HepG2 (cell line): ENCODE measurements at regions of chr2 and their contacts with region 1.

Region 1: DNA sequence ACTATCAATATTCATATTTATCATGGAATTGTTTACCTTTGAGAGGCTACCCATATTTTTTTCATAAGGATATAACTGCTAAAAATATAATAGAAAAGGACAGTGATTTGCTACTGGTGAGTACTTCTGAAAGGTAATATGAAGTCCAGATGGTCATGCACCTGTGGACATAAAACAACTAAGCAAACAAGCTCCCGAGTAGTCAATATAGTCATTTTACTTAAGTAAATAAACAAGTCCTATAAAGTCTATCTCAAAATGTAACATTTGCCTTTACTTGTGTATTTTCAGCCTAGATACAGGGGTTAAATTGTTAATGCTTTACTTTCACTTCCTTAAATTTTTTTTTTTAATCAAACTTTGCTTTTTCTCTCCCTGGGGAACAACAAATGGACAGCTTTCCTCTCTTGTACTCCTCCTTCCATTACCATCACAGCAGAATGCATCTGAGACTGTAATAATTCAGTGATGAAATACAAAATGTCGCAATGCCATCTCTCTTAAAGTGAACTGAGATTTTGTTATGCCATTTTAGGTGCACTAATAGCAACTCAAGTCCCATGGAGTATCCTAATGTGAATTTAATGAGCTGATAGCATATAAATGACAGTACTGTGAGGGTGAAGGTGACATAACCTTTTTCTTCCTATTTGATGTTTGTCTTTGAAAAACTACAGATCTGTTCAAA is 1325.4 kb upstream of the ZEB2 start:
- DNase-seq: peak; percentile 41
- ATAC-seq: peak; percentile 74
- H3K4me3 ChIP-seq: no peak overlapping the region; a peak in 1 of 6 replicates
- H3K27ac ChIP-seq: peak overlapping the region; percentile 17
- H3K4me1 ChIP-seq: peaks cover 42% of the 10 kb centered on the region
- H3K27me3 ChIP-seq: no peaks in the 10 kb centered on the region
- CTCF ChIP-seq: no peak
- EP300 ChIP-seq: peak in 1 of 2 experiments; percentile 11; a peak in 1 of 4 replicates
- POLR2A ChIP-seq: no peak
- RAD21 ChIP-seq: no peak

Region 2: GRCh38 chr2:145752091-145752806 is 93.1 kb before region 1 on chr2:
- CTCF ChIA-PET with region 1: no interaction called
- POLR2A ChIA-PET with region 1: no interaction called
- in situ Hi-C with region 1: no loop called
- intact Hi-C with region 1: loop called (anchors 2 kb)
- DNase-seq: peak; percentile 93
- ATAC-seq: peak; percentile 75
- H3K4me3 ChIP-seq: no peak overlapping the region
- H3K27ac ChIP-seq: peak overlapping the region; percentile 78
- H3K4me1 ChIP-seq: peaks cover 63% of the 10 kb centered on the region
- H3K27me3 ChIP-seq: no peaks in the 10 kb centered on the region
- CTCF ChIP-seq: peak; percentile 88
- EP300 ChIP-seq: peak in 1 of 2 experiments; percentile 44; a peak in 1 of 4 replicates
- POLR2A ChIP-seq: no peak
- RAD21 ChIP-seq: peak; percentile 83

Region 3: DNA sequence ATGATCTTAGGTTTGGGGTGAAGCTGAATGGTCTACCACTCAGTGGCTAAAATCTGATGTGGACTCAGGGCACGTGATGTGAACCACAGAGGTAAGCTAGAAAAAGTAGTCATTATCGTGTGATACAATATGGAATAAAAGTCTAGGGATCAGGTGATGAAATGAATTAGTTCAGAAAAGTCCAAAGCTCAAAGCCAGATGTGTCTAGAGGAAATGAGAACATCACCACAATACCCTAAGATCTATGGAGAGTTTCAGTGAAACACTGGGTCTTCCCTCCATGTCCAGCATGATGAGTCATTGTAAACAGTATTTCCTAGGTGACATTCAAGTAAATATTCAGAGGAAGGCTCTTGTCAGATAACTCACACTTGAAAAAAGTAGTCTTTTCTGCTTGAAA is 68.1 kb before region 1 on chr2:
- CTCF ChIA-PET with region 1: no interaction called
- POLR2A ChIA-PET with region 1: no interaction called
- in situ Hi-C with region 1: no loop called
- intact Hi-C with region 1: loop called (anchors 5 kb)
- DNase-seq: peak; percentile 88
- ATAC-seq: peak; percentile 96
- H3K4me3 ChIP-seq: no peak overlapping the region
- H3K27ac ChIP-seq: peak overlapping the region; percentile 52
- H3K4me1 ChIP-seq: peaks cover 23% of the 10 kb centered on the region
- H3K27me3 ChIP-seq: no peaks in the 10 kb centered on the region
- CTCF ChIP-seq: no peak
- EP300 ChIP-seq: peak in 1 of 2 experiments; percentile 88; a peak in 1 of 4 replicates
- POLR2A ChIP-seq: no peak
- RAD21 ChIP-seq: no peak